MCF 10A (cell line): ENCODE measurements at regions of chr11 and their contacts with region 1.

Region 1: DNA sequence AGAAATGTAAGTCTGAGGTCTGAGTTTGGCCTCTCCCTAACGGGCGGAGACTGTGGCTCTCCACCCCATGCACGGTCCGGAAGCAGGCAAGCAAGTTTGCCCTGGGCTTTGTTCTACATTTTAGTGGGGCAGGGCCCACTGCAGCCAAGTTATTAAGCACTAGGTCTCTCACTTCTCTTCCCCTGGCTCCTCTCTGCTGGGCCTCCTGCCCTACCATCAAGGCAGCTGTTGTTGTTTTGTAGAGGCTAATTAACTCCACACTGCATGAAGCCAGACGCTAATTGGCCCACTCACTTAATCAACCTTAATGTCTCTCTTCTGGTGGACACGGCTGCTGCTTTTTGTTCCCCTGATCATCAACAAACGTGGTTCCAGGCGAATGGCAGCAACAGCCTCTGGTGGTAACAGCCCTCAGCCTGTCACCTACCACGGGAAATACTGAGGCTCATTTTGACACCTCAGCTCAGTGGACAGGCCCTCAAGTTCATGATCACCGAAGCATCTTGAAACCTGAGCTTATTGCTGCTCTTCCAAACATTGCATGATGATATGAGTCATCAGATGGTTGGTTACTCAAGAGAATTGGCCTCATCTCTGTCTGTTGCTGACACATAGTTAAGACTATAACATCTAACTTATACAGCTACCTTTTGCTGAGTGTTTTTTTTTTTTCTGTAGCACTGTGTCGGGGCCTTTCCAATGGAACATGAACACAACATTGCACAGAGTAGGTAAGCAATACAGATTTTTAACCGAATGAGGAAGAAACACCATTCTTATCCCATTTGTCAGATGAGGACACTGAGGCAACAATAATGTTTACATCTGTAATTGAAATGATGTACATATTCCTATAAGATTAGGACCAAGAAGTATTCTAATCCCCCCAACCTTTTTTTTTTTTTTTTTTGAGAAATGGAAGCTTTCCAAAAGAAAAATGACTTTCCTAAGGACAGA is 20.8 kb upstream of the LMO2 start:
- DNase-seq: peak; percentile 92
- H3K4me3 Mint-ChIP-seq: no peak overlapping the region
- H3K27ac Mint-ChIP-seq: no peak overlapping the region
- H3K4me1 Mint-ChIP-seq: peaks cover 10% of the 10 kb centered on the region
- H3K27me3 Mint-ChIP-seq: peaks cover 13% of the 10 kb centered on the region
- CTCF ChIP-seq: no peak

Region 2: DNA sequence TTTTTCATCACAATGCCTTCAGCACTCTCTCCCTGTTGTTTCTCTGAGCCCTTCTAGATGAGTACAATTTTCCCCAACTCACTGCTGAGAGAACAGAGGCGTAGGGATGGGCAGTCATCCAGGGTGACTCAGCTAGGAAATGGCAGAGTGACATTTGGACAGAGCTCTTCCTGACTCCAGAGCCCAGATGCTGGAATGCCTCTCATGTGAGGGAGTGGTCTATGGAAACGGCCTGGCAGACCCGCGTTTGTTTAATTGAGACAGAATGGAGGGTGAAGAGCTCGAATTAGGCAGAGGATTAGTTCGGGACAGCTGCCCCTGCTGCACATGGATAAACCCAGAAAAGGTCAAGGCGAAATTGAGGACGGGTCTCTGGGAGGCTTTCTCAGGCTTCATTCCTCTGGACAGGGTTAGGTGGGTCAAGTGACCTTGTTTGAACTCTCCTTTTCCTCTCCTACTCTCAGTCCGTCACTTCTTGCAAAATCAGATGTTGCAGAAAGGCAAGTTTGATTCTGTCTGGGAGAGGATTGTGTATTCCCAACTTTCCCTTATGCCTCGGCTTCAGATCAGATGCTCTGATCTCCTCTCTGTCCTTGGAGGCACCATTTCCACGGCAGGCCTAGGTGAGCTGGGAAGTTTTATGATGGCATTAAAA is 13.2 kb before region 1 on chr11:
- CTCF ChIA-PET with region 1: interaction called, 4 read pairs
- POLR2A ChIA-PET with region 1: interaction called, 14 read pairs
- intact Hi-C with region 1: no loop called
- DNase-seq: peak; percentile 83
- H3K4me3 Mint-ChIP-seq: no peak overlapping the region
- H3K27ac Mint-ChIP-seq: no peak overlapping the region
- H3K4me1 Mint-ChIP-seq: peaks cover 18% of the 10 kb centered on the region
- H3K27me3 Mint-ChIP-seq: peaks cover 15% of the 10 kb centered on the region
- CTCF ChIP-seq: no peak